ENCODE measurements at regions of chr6 and their contacts with region 1.

Region 1: DNA sequence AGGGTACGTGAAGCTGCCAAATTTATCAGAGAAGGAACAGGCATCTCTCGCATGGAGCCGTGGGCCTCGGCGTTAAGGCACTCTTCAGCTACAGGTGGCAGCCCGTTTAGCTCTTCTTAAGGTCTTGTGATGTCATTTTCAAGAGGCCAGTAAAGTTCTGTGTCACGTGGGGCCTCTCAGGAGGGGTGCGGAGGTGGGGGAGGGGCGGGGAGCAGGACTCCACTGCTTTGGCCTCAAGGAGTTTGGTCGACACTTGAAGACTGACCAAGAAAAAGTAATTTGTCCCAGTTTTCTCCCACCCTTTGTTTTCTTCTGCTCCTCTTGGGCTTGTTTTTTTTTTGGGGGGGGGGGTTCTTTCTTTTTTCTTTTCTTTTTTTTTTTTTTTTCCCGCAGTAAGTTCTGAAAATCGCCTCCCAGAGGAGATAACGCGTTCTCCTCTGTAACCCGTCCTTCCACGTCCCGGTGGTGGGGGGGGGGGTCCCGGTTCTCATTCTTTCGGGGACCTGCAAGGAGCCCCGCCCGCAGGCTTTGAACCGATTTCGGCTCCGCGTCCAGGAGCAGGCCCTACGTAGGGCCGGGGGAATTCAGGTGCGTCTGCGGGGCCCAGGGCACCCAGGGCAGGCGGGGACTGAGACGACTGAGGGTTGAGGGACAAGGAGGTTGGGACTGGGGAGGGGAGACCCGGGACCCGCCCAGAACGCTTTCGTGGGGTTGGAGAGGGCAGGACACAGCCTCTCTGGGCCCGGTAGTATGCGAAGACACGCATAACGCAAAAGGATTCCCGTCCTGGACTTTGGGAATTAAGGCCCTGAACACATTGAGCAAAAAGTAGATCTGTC is 26.0 kb downstream of the GPX6 start:
- DNase-seq: peak; percentile 24
- H3K4me3 Mint-ChIP-seq: peak overlapping the region; percentile 78
- H3K27ac Mint-ChIP-seq: peak overlapping the region; percentile 77
- H3K4me1 Mint-ChIP-seq: peaks cover 27% of the 10 kb centered on the region
- H3K27me3 Mint-ChIP-seq: peaks cover 48% of the 10 kb centered on the region

Region 2: GRCh38 chr6:27157459-27158315 is 1331.9 kb before region 1 on chr6:
- intact Hi-C with region 1: no loop called
- DNase-seq: peak; percentile 70
- H3K4me3 Mint-ChIP-seq: peak overlapping the region; percentile 77
- H3K27ac Mint-ChIP-seq: peak overlapping the region; percentile 80
- H3K4me1 Mint-ChIP-seq: peaks cover 47% of the 10 kb centered on the region
- H3K27me3 Mint-ChIP-seq: peaks cover 2% of the 10 kb centered on the region

Region 3: GRCh38 chr6:27318973-27319372 is 1170.6 kb before region 1 on chr6:
- intact Hi-C with region 1: no loop called
- DNase-seq: no peak
- H3K4me3 Mint-ChIP-seq: no peak overlapping the region
- H3K27ac Mint-ChIP-seq: no peak overlapping the region
- H3K4me1 Mint-ChIP-seq: no peaks in the 10 kb centered on the region
- H3K27me3 Mint-ChIP-seq: peaks cover 26% of the 10 kb centered on the region

Region 4: GRCh38 chr6:28424153-28424552 is 65.4 kb before region 1 on chr6:
- intact Hi-C with region 1: no loop called
- DNase-seq: no peak
- H3K4me3 Mint-ChIP-seq: no peak overlapping the region
- H3K27ac Mint-ChIP-seq: no peak overlapping the region
- H3K4me1 Mint-ChIP-seq: peaks cover 15% of the 10 kb centered on the region
- H3K27me3 Mint-ChIP-seq: peaks cover 30% of the 10 kb centered on the region

Region 5: DNA sequence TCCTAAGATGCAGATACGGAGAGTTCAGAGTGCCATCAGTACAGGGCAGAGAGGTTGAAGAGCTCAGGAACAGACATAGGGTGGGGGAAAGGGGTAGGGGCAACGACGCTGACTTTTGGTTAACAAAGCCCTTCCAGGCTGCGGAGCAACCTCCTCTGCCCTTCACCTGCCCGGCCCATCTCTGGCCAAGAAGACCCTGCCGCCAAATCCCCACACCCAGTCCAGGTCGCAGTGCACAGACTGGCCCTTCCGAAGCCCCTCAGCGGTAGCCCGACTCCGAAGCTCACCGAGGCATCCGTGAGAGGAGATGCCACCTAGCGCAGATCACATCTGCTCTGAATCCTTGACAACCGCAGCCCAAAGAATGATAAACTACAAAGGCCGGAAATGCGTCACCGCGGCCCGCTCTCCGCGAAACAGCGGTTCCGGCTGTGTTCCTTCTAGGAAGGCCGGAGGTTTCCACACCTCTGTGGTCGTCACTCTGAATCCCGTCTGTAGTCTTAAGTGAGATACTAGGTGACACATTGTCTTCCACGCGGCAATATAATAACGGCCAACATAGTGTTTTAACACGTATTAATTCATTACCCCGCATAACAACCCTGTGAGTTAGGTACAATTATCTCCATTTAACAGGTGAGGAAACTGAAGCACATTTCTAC is 46.3 kb before region 1 on chr6 and contains the start of gene ZSCAN23:
- intact Hi-C with region 1: loop called (anchors 5 kb)
- DNase-seq: peak; percentile 79
- H3K4me3 Mint-ChIP-seq: peak within 1 kb of the TSS; percentile 98
- H3K27ac Mint-ChIP-seq: peak within 1 kb of the TSS; percentile 89
- H3K4me1 Mint-ChIP-seq: peaks cover 41% of the 10 kb centered on the region
- H3K27me3 Mint-ChIP-seq: peaks cover 16% of the 10 kb centered on the region
- total RNA-seq, gene ZSCAN23: 1.1 and 2.2 TPM in 2 replicates

Region 6: GRCh38 chr6:28542440-28543296 is 53.1 kb after region 1 on chr6:
- intact Hi-C with region 1: loop called (anchors 1 kb)
- DNase-seq: peak; percentile 18
- H3K4me3 Mint-ChIP-seq: peak overlapping the region; percentile 77
- H3K27ac Mint-ChIP-seq: peak overlapping the region; percentile 44
- H3K4me1 Mint-ChIP-seq: peaks cover 28% of the 10 kb centered on the region
- H3K27me3 Mint-ChIP-seq: peaks cover 44% of the 10 kb centered on the region

Region 7: DNA sequence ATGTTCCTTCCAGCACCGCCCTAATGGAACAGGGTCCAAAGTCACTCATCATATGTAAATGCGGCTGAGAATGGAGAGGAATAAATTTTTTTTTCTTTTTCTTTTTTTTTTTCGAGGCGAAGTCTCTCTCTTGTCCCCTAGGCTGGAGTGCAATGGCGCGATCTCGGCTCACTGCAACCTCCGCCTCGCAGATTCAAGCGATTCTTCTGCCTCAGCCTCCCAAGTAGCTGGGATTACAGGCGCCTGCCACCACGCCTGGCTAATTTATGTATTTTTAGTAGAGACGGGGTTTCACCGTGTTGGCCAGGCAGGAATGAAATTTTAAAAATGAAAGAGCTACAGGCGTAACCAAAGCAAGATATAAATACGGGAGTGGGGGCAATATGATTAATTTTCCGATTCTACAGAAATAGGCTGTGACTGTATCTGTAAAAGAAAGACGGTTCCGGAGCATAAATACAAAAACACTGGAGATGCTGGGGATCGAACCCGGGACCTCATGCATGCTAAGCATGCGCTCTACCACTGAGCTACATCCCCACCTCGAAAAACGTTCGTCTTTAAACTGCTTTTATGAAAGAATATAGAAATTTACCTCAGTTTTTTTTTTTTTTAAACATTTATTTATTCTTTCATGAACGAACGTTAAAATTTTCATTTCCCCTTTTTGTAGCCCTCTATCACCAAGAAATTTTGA is 168.3 kb after region 1 on chr6:
- intact Hi-C with region 1: no loop called
- DNase-seq: no peak
- H3K4me3 Mint-ChIP-seq: peak overlapping the region; percentile 80
- H3K27ac Mint-ChIP-seq: peak overlapping the region; percentile 77
- H3K4me1 Mint-ChIP-seq: peaks cover 24% of the 10 kb centered on the region
- H3K27me3 Mint-ChIP-seq: peaks cover 66% of the 10 kb centered on the region